Common myeloid progenitor, CD34-positive (primary cell): ENCODE measurements at regions of chr6 and their contacts with region 1.

Region 1: GRCh38 chr6:13427801-13428582 is 59.4 kb downstream of the GFOD1 start:
- DNase-seq: peak; percentile 71 to 90 (median 87)
- H3K4me3 ChIP-seq: peak overlapping the region in 5 of 7 experiments; percentile 13 to 59 (median 44)
- H3K27ac ChIP-seq: no peak overlapping the region
- H3K4me1 ChIP-seq: peaks cover 13 to 35% (median 28%) of the 10 kb centered on the region in 4 experiments
- H3K27me3 ChIP-seq: peaks cover 0 to 2% (median 0%) of the 10 kb centered on the region in 5 experiments

Region 2: DNA sequence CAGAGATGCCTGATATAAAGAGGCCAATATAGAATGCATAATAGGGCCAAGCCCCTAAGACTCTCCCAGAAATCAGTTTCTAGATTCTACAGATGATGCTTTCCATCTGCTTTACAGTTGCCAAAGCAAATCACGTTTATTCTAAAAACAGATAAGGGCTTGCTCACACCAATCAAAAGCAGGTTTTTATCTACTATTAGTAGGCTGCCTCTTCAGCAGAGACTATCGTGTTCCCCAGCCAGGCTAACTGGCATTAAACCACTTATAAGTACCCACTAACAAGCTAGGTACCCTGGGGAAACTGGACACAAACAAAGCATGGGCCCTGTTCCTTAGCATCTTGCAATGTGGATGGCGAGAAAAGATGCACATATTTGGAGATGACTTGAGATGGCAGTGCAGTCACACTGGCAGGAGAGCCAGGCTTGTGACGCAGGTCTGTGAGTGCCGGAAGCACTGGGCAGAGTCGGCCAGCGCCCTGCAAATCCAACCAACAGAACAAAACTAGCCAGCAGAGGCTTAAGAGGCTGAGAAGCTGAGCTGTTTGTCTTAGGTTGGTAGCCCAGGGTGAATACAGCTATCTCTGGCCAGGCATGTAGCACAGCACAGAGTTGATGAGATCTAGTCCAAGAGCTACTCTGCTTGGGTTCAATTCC is 14.0 kb before region 1 on chr6:
- CTCF ChIA-PET with region 1: interaction called, 10 read pairs
- POLR2A ChIA-PET with region 1: no interaction called
- DNase-seq: peak; percentile 68 to 89 (median 75)
- H3K4me3 ChIP-seq: no peak overlapping the region
- H3K27ac ChIP-seq: no peak overlapping the region
- H3K4me1 ChIP-seq: peaks cover 0 to 8% (median 2%) of the 10 kb centered on the region in 4 experiments
- H3K27me3 ChIP-seq: no peaks in the 10 kb centered on the region

Region 3: GRCh38 chr6:13445005-13445743 is 17.2 kb after region 1 on chr6:
- CTCF ChIA-PET with region 1: interaction called, 25 read pairs
- POLR2A ChIA-PET with region 1: interaction called, 4 read pairs
- DNase-seq: peak; percentile 56 to 85 (median 84)
- H3K4me3 ChIP-seq: peak overlapping the region in 1 of 7 experiments; percentile 3
- H3K27ac ChIP-seq: no peak overlapping the region
- H3K4me1 ChIP-seq: peaks cover 11 to 34% (median 27%) of the 10 kb centered on the region in 4 experiments
- H3K27me3 ChIP-seq: no peaks in the 10 kb centered on the region

Region 4: GRCh38 chr6:13454286-13455221 is 26.6 kb after region 1 on chr6:
- CTCF ChIA-PET with region 1: interaction called, 11 read pairs
- POLR2A ChIA-PET with region 1: no interaction called
- DNase-seq: peak; percentile 93 to 98 (median 97)
- H3K4me3 ChIP-seq: peak overlapping the region in 4 of 7 experiments; percentile 6 to 45 (median 14)
- H3K27ac ChIP-seq: peak overlapping the region in 1 of 2 experiments; percentile 59
- H3K4me1 ChIP-seq: peaks cover 4 to 41% (median 27%) of the 10 kb centered on the region in 4 experiments
- H3K27me3 ChIP-seq: no peaks in the 10 kb centered on the region

Region 5: DNA sequence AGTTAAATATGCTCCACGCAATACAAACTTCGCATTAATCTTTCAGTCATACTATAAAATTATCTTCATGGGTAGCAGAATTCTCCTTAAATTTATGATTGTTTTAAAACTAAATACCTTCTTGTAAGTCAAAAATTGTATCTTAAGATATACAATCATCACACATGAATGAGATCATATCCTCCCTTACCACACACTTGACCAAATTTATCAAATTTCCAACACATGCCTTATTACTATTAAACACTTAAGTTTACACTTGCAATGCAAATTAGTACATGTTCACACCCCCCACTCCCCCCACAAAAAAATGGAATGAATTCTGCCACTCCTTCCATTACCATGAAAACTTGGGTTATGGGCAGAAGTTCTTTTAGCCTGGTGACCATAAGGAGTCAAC is 269.9 kb after region 1 on chr6:
- CTCF ChIA-PET with region 1: no interaction called
- POLR2A ChIA-PET with region 1: no interaction called
- DNase-seq: peak in 1 of 3 donors; percentile 37
- H3K4me3 ChIP-seq: no peak overlapping the region
- H3K27ac ChIP-seq: no peak overlapping the region
- H3K4me1 ChIP-seq: peaks cover 4 to 60% (median 20%) of the 10 kb centered on the region in 4 experiments
- H3K27me3 ChIP-seq: no peaks in the 10 kb centered on the region